Thyroid gland (tissue), 4 donors: ENCODE measurements at regions of chr4 and their contacts with region 1.

Region 1: GRCh38 chr4:40629401-40630334 is at the start of gene RBM47:
- DNase-seq: peak; percentile 87 to 88
- H3K4me3 ChIP-seq: peak within 1 kb of the TSS; percentile 59 to 83 (median 63)
- H3K27ac ChIP-seq: peak within 1 kb of the TSS; percentile 95 to 97 (median 97)
- H3K4me1 ChIP-seq: peaks cover 20 to 21% of the 10 kb centered on the region in 2 donors
- H3K27me3 ChIP-seq: no peaks in the 10 kb centered on the region
- CTCF ChIP-seq: no peak
- POLR2A ChIP-seq: peak; percentile 46 to 84
- total RNA-seq, gene RBM47: 200 to 369 (median 323) TPM

Region 2: DNA sequence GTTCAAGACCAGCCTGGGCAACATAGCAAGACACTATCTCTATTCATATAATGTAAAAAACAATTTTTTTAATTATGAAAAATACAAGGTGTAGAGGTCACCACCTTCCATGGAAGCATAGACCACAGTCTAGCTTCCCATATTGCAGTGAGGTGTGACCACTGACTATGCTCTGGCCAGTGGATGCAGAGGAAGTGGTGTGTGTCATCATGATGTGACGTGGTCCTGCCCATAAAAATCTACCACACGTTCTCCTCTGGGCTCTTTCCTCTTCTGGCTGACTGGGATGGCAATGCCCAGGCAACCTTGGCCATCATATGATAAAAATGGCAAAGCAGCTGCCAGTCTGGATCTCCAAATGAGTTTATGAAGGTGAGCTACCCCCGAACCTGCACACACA is 65.7 kb before region 1 on chr4:
- intact Hi-C with region 1: loop called (anchors 10 kb)
- DNase-seq: no peak
- H3K4me3 ChIP-seq: no peak overlapping the region
- H3K27ac ChIP-seq: peak overlapping the region in 2 of 3 donors; percentile 8 to 81
- H3K4me1 ChIP-seq: peaks cover 36 to 57% of the 10 kb centered on the region in 2 donors
- H3K27me3 ChIP-seq: no peaks in the 10 kb centered on the region
- CTCF ChIP-seq: no peak
- POLR2A ChIP-seq: no peak

Region 3: GRCh38 chr4:40699648-40700047 is 70.0 kb after region 1 on chr4:
- intact Hi-C with region 1: loop called (anchors 10 kb)
- DNase-seq: no peak
- H3K4me3 ChIP-seq: no peak overlapping the region
- H3K27ac ChIP-seq: no peak overlapping the region
- H3K4me1 ChIP-seq: peaks cover 5 to 7% of the 10 kb centered on the region in 2 donors
- H3K27me3 ChIP-seq: no peaks in the 10 kb centered on the region
- CTCF ChIP-seq: no peak
- POLR2A ChIP-seq: no peak